Prostate gland (tissue), 2 donors: ENCODE measurements at regions of chrX and their contacts with region 1.

Region 1: DNA sequence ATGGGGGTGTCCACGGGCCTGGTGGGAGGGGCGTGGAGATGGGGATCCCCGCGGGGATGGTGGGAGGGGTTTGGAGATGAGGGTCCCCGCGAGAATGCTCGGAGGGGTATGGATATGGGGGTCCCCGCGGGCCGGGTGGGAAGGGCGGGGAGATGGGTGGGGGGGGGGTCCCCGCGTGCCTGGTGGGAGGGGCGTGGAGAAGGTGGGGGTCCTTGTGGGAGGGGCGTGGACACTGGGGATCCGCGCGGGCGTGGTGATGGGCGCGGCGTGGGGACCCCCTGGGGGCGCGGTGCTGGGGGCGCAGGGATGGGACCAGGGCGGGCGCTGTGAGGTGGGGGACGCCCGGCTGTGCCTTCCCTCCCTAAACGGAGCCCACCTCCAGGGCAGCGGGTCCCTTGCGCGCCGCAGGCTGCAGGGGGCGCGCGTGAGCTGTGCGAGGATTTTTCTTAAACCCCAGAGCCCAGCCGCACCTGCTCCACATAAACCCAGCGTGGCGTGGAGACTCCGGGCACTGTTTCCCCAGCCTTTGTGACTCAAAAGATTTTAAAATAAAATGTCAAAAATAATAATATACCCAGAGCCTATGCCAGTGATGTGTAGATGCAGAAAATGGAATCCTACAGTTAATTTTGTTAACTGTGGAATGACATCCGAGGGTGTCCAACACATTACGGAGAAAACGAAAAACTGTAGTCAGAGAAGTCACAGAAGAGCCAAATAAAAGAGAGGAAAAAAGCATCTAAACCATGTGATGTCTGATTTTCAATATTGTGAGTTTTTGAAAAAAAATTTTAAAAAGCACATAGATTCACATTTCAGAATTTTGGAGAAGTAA is 1.5 kb upstream of the ASMTL start:
- DNase-seq: peak; percentile 80
- H3K4me3 ChIP-seq: peak overlapping the region; percentile 38 to 62
- H3K27ac ChIP-seq: peak overlapping the region; percentile 51 to 89
- H3K4me1 ChIP-seq: peaks cover 9% of the 10 kb centered on the region
- H3K27me3 ChIP-seq: no peaks in the 10 kb centered on the region
- CTCF ChIP-seq: peak; percentile 89 to 96 (median 93)
- POLR2A ChIP-seq: no peak

Region 2: GRCh38 chrX:1391707-1392375 is 62.3 kb before region 1 on chrX and contains the start of gene SLC25A6:
- intact Hi-C with region 1: loop called (anchors 2 kb)
- DNase-seq: peak; percentile 99
- H3K4me3 ChIP-seq: peak within 1 kb of the TSS; percentile 98 to 100
- H3K27ac ChIP-seq: peak within 1 kb of the TSS; percentile 94 to 96
- H3K4me1 ChIP-seq: peaks cover 7% of the 10 kb centered on the region
- H3K27me3 ChIP-seq: no peaks in the 10 kb centered on the region
- CTCF ChIP-seq: peak in 1 of 4 experiments; percentile 20
- POLR2A ChIP-seq: peak; percentile 55
- total RNA-seq, gene SLC25A6: 252 to 358 TPM

Region 3: GRCh38 chrX:1516596-1517104 is 62.5 kb after region 1 on chrX:
- intact Hi-C with region 1: no loop called
- DNase-seq: no peak
- H3K4me3 ChIP-seq: no peak overlapping the region
- H3K27ac ChIP-seq: no peak overlapping the region
- H3K4me1 ChIP-seq: no peaks in the 10 kb centered on the region
- H3K27me3 ChIP-seq: no peaks in the 10 kb centered on the region
- CTCF ChIP-seq: no peak
- POLR2A ChIP-seq: no peak

Region 4: DNA sequence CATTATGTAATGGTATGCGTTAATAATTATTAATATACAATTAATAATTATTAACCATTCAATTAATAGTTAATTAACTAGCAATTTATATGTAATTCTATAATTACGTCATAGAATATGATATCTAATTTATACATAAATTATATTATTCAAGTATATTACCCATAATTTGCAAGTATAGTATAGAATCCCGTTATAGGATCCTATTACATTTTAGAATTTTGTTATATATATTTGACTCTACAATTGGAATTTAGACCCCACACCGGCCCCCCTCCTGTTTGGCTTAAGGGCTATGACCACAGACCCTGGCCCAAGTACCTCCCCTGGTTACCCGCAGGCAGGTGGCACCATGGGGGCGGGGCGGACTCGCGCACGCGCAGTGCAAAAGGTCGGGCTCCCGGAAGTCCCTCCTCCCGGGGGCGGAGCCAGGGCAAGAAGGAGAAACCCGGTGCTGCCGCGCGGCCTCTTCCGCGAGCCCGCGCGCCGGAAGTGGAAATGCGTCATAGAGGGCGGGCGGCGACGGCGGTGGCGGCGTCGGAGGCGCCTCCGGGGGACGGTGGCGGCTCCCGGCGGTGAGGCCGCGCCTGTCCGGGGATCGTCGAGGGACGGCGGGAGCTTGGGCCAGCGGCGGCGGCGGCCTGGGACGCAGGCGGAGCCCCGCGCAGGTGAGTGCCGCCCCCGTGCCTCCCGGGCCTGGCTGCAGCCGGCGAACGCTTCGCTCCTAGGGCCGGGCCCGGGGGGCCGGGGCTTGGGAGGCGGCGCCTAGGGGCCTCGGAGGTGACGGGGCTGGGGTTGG is 137.1 kb after region 1 on chrX and contains the start of gene AKAP17A:
- intact Hi-C with region 1: loop called (anchors 5 kb)
- DNase-seq: peak; percentile 93
- H3K4me3 ChIP-seq: peak within 1 kb of the TSS; percentile 66 to 98
- H3K27ac ChIP-seq: peak within 1 kb of the TSS; percentile 68 to 76
- H3K4me1 ChIP-seq: no peaks in the 10 kb centered on the region
- H3K27me3 ChIP-seq: no peaks in the 10 kb centered on the region
- CTCF ChIP-seq: peak in 2 of 4 experiments; percentile 43 to 44
- POLR2A ChIP-seq: peak; percentile 80
- total RNA-seq, gene AKAP17A: 45.5 to 97.7 TPM

Region 5: DNA sequence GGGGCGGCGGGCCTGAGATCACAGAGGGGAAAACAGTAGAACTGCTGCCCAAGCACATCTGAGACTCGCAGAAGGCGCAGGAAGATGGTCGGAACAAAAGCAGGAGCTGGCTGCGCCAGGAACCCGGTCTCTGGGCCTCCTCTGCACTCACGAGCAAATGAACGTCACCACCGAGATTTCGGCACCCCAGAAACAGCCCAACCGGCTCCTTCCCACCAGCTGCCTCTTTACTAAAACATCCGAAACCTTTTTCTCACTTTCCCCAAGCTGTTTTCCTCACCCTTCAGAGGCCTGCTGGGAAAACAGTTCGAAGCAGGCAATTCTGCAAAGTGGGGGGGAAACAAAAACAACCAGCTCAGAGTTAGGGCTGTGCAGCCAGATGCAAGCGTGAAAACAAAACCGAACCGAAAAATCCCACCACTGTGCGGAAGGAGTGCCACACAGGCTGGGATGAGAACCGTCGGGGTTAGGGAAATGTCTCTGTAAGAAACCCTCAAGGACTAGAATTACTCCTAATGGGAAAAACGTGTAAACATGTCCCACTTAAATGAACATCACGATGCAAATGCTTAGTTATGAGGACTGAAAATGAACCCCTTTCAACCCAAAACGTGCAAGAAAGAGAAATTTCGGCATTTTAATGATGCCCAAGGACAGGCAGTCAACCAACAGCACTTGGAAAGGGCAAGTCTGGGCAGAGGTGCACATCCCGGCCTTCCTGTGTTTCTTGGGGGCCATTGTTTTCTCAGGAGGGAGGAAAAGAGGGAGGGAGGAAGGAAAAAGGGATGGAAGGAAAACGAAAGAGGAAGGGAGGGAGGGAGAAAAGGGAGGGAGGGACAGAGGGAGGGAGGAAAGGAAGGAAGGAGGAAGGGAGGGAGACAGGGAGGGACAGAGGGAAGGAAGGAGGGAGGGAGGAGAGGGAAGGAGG is 1030.8 kb after region 1 on chrX:
- intact Hi-C with region 1: loop called (anchors 5 kb)
- DNase-seq: no peak
- H3K4me3 ChIP-seq: peak overlapping the region; percentile 0 to 11
- H3K27ac ChIP-seq: peak overlapping the region; percentile 60 to 61
- H3K4me1 ChIP-seq: no peaks in the 10 kb centered on the region
- H3K27me3 ChIP-seq: no peaks in the 10 kb centered on the region
- CTCF ChIP-seq: no peak
- POLR2A ChIP-seq: no peak

Region 6: GRCh38 chrX:2627272-2627867 is 1173.2 kb after region 1 on chrX:
- intact Hi-C with region 1: loop called (anchors 10 kb)
- DNase-seq: peak; percentile 17
- H3K4me3 ChIP-seq: no peak overlapping the region
- H3K27ac ChIP-seq: no peak overlapping the region
- H3K4me1 ChIP-seq: no peaks in the 10 kb centered on the region
- H3K27me3 ChIP-seq: no peaks in the 10 kb centered on the region
- CTCF ChIP-seq: peak in 3 of 4 experiments; percentile 34 to 50 (median 41)
- POLR2A ChIP-seq: no peak